GM12878 (cell line): ENCODE measurements at regions of chr6 and their contacts with region 1.

Region 1: GRCh38 chr6:47034919-47035318 is 7.2 kb downstream of the ADGRF1 start:
- DNase-seq: no peak
- ATAC-seq: no peak
- H3K4me3 ChIP-seq: no peak overlapping the region
- H3K27ac ChIP-seq: no peak overlapping the region
- H3K4me1 ChIP-seq: no peaks in the 10 kb centered on the region
- H3K27me3 ChIP-seq: no peaks in the 10 kb centered on the region
- CTCF ChIP-seq: no peak
- EP300 ChIP-seq: no peak
- POLR2A ChIP-seq: no peak
- RAD21 ChIP-seq: no peak

Region 2: DNA sequence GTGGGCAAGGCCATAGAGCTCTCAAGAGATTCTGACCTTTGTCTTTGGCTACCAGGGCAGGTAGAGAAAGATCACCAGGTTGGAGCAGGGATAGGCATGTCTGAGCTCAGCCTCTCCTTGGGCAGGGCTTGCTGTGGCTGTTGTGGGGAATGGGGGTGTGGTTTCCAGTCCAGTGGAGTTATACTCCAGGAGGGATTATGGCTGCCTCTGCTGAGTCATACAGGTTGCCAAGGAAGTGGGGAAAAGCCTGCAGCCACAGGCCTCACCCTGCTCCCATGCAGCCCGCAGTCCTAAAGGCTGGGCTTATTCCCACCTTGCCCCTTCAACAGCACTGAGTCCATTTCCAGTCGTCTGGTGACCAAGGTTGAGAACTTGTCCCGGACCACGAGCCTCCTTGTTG is 219.8 kb before region 1 on chr6:
- CTCF ChIA-PET with region 1: no interaction called
- POLR2A ChIA-PET with region 1: no interaction called
- RAD21 ChIA-PET with region 1: no interaction called
- SMC1A ChIA-PET with region 1: no interaction called
- in situ Hi-C with region 1: no loop called
- intact Hi-C with region 1: no loop called
- DNase-seq: no peak
- ATAC-seq: no peak
- H3K4me3 ChIP-seq: no peak overlapping the region
- H3K27ac ChIP-seq: no peak overlapping the region
- H3K4me1 ChIP-seq: no peaks in the 10 kb centered on the region
- H3K27me3 ChIP-seq: no peaks in the 10 kb centered on the region
- CTCF ChIP-seq: no peak
- EP300 ChIP-seq: no peak
- POLR2A ChIP-seq: no peak
- RAD21 ChIP-seq: no peak

Region 3: GRCh38 chr6:47047479-47048407 is 12.8 kb after region 1 on chr6:
- CTCF ChIA-PET with region 1: interaction called, 11 read pairs
- POLR2A ChIA-PET with region 1: no interaction called
- RAD21 ChIA-PET with region 1: no interaction called
- SMC1A ChIA-PET with region 1: interaction called, 5 read pairs
- in situ Hi-C with region 1: no loop called
- intact Hi-C with region 1: no loop called
- DNase-seq: peak; percentile 11
- ATAC-seq: peak; percentile 91
- H3K4me3 ChIP-seq: no peak overlapping the region
- H3K27ac ChIP-seq: no peak overlapping the region
- H3K4me1 ChIP-seq: no peaks in the 10 kb centered on the region
- H3K27me3 ChIP-seq: peaks cover 2 to 3% of the 10 kb centered on the region in 2 experiments; a peak in 3 of 4 replicates
- CTCF ChIP-seq: peak; percentile 64 to 79 (median 76); a peak in 5 of 6 replicates
- EP300 ChIP-seq: no peak
- POLR2A ChIP-seq: no peak
- RAD21 ChIP-seq: peak; percentile 79